GM13976 (cell line): ENCODE measurements at regions of chr7 and their contacts with region 1.

Region 1: DNA sequence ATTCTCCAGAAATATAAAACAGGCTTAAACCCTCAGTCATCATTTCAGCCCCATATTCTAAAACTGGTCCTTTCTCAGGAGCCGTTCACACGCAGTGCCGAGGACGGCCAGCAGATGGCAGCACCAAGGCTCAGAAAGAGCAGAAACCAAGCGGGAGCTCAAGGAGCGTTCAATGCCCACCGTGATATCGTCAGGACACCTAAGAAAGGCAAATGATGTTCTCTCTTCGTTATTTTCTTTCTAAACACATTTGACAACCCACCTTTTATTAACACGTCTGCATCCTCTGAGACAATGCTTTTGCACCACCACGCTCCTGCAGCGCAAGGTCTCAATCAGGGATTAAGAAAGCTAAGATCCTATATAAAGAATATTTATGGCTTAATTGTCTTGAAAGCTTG is 45.7 kb upstream of the RBM33 start:
- DNase-seq: peak; percentile 82
- CTCF ChIP-seq: peak; percentile 98

Region 2: DNA sequence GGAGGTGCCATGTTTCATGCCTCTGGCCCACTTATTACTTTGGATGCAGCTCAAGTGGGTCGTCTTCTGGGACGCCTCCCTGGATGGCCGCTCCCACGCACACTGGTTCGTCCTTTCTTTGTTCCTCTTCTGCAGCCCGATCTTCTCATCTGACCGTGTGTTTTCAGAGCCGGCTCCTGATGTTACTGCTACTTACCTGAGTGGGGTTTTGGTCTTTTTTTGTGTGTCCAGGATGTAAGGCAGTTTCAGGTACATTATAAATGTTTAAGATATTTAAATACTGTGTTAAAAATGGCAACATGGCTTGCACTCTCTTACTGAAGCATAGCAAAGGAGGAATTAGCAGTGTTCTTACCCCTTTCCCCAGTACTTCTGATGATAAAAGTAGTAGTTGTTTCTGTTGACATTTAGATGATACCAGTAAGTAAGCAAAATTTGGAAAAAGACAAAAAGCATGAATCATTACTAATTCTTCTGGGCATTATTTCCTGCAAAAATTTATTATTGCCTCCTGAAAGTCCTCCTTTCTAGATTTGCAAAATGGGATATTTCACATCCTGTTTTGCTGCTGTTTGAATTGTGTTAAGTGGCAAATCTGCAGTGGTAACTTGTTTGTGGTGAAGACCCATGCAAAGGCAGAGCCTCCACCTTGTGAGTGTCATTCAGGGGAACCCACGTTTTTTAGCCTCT is 154.1 kb after region 1 on chr7:
- in situ Hi-C with region 1: loop called (anchors 10 kb)
- DNase-seq: peak; percentile 54
- CTCF ChIP-seq: no peak

Region 3: GRCh38 chr7:156055206-156055822 is 456.5 kb after region 1 on chr7:
- in situ Hi-C with region 1: no loop called
- DNase-seq: no peak
- CTCF ChIP-seq: no peak